CD8-positive, alpha-beta T cell (primary cell): ENCODE measurements at regions of chr4 and their contacts with region 1.

Region 1: GRCh38 chr4:75995727-75996126 is 5.0 kb upstream of the SDAD1 start:
- DNase-seq: peak in 2 of 9 experiments; percentile 55 to 68
- ATAC-seq: no peak
- H3K4me3 ChIP-seq: no peak overlapping the region
- H3K4me3 Mint-ChIP-seq: no peak overlapping the region
- H3K27ac ChIP-seq: no peak overlapping the region
- H3K27ac Mint-ChIP-seq: no peak overlapping the region
- H3K4me1 ChIP-seq: peaks cover 6% of the 10 kb centered on the region
- H3K4me1 Mint-ChIP-seq: peaks cover 4% of the 10 kb centered on the region
- H3K27me3 ChIP-seq: no peaks in the 10 kb centered on the region
- H3K27me3 Mint-ChIP-seq: peaks cover 1% of the 10 kb centered on the region
- CTCF ChIP-seq: peak; percentile 77

Region 2: DNA sequence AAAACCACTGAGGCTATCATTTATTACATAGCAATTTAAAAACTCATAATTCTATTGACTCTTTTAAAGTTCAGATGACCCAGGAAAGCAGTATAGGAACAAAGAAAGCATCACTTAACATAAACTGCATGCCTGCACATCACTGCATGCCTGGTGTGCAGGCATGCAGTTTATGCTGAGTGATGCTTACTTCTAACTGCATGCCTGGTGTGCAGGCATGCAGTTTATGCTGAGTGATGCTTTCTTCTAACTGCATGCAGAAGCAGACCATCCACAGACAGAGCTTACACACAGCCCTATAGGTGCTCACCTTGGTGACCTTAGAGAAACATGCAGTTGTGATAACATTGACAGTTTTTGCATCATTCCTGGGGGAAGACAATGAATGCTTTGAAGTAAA is 22.0 kb before region 1 on chr4:
- CTCF ChIA-PET with region 1: no interaction called
- POLR2A ChIA-PET with region 1: no interaction called
- intact Hi-C with region 1: no loop called
- DNase-seq: no peak
- ATAC-seq: no peak
- H3K4me3 ChIP-seq: no peak overlapping the region
- H3K4me3 Mint-ChIP-seq: no peak overlapping the region
- H3K27ac ChIP-seq: no peak overlapping the region
- H3K27ac Mint-ChIP-seq: no peak overlapping the region
- H3K4me1 ChIP-seq: no peaks in the 10 kb centered on the region
- H3K4me1 Mint-ChIP-seq: no peaks in the 10 kb centered on the region
- H3K27me3 ChIP-seq: no peaks in the 10 kb centered on the region
- H3K27me3 Mint-ChIP-seq: no peaks in the 10 kb centered on the region
- CTCF ChIP-seq: no peak

Region 3: DNA sequence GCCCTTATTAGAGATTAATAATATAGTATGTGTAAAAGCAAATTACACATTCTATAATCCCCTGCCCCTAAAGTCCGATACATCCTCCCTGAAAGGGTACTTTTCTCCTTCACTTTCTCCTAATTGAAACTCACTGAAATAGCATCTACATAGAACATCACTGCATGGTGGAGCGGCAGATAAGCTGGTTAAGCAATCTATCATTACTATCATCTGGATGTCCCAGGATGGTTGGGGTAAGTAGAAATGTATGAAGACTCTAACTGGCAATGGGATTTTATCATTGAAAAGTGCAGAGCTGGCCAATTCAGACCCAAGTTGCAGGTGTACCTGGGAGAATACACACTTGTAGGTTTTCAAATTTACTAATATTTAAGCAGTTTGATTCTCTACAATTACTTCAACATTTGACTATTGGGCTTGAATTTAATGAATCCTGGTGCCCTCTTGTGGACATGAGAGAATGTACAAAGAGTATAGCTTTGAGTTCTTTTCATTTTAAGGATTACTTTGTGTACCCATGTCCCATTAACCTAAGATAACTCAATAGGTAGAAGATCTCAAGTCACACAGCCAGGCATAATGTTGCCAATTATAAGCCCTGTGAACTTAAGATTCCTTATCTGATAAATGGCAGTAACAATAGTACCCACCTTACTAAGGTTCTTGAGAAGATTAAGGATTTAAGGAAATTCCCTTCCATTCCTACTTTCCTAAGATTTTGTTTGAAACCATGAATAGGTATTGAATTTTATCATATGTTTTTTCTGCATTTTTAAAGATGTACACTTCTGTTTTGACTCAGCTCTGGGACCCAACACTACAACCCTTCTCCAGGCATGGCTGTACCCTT is 509.1 kb after region 1 on chr4:
- CTCF ChIA-PET with region 1: interaction called, 4 read pairs
- POLR2A ChIA-PET with region 1: no interaction called
- intact Hi-C with region 1: loop called (anchors 5 kb)
- DNase-seq: peak in 2 of 9 experiments; percentile 48 to 57
- ATAC-seq: no peak
- H3K4me3 ChIP-seq: no peak overlapping the region
- H3K4me3 Mint-ChIP-seq: no peak overlapping the region
- H3K27ac ChIP-seq: no peak overlapping the region
- H3K27ac Mint-ChIP-seq: no peak overlapping the region
- H3K4me1 ChIP-seq: no peaks in the 10 kb centered on the region
- H3K4me1 Mint-ChIP-seq: no peaks in the 10 kb centered on the region
- H3K27me3 ChIP-seq: no peaks in the 10 kb centered on the region
- H3K27me3 Mint-ChIP-seq: peaks cover 16% of the 10 kb centered on the region
- CTCF ChIP-seq: peak; percentile 55